ENCODE measurements at regions of chr7 and their contacts with region 1.

Region 1: GRCh38 chr7:90424720-90425119 is 21.5 kb downstream of the CLDN12 start:
- DNase-seq: no peak
- ATAC-seq: no peak
- H3K4me3 ChIP-seq: no peak overlapping the region
- H3K27ac ChIP-seq: no peak overlapping the region
- H3K4me1 ChIP-seq: peaks cover 5% of the 10 kb centered on the region
- H3K27me3 ChIP-seq: no peaks in the 10 kb centered on the region

Region 2: DNA sequence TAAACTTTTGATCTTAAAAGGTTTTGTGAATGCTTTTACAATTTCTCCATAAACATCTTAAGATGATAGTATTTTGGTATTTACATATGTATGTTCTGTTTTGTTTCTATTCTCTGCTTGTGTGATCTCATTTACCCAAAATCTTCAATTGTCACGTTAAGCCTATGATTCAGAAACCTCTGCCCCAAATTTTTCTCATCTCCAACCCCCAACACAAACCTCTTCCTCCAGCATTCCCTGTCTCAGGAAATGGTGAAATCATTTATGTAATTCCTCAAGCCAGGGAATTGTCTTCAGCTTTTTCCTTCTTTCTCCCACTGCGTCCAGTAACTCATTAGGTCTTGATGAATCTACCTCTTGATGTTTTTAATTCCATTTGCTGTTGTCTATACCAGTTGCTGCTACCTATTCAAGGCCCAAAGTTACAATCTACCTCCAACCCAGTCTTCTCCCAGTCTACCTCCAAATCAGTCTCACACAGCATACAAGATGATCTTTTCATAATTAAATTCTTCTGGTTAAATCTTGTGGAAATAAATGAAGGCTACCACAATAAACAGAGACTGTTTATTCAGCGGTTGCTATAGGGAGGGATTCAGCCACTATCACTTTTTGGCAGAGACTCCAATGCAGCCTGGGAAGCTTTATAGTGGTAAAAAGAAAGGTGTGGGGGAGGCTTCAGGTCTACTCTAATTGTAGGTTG is 174.0 kb before region 1 on chr7:
- intact Hi-C with region 1: loop called in 1 of 4 experiments (anchors 10 kb)
- DNase-seq: no peak
- ATAC-seq: peak; percentile 16 to 50
- H3K4me3 ChIP-seq: no peak overlapping the region
- H3K27ac ChIP-seq: no peak overlapping the region
- H3K4me1 ChIP-seq: peaks cover 2% of the 10 kb centered on the region
- H3K27me3 ChIP-seq: no peaks in the 10 kb centered on the region

Region 3: GRCh38 chr7:90312745-90313144 is 112.0 kb before region 1 on chr7:
- intact Hi-C with region 1: loop called in 1 of 4 experiments (anchors 10 kb)
- DNase-seq: no peak
- ATAC-seq: no peak
- H3K4me3 ChIP-seq: no peak overlapping the region
- H3K27ac ChIP-seq: no peak overlapping the region
- H3K4me1 ChIP-seq: no peaks in the 10 kb centered on the region
- H3K27me3 ChIP-seq: no peaks in the 10 kb centered on the region

Region 4: GRCh38 chr7:90720984-90721760 is 296.5 kb after region 1 on chr7:
- intact Hi-C with region 1: no loop called
- DNase-seq: no peak
- ATAC-seq: peak; percentile 58 to 70
- H3K4me3 ChIP-seq: no peak overlapping the region
- H3K27ac ChIP-seq: no peak overlapping the region
- H3K4me1 ChIP-seq: peaks cover 5% of the 10 kb centered on the region
- H3K27me3 ChIP-seq: no peaks in the 10 kb centered on the region